HCT116 (cell line): ENCODE measurements at regions of chr6 and their contacts with region 1.

Region 1: DNA sequence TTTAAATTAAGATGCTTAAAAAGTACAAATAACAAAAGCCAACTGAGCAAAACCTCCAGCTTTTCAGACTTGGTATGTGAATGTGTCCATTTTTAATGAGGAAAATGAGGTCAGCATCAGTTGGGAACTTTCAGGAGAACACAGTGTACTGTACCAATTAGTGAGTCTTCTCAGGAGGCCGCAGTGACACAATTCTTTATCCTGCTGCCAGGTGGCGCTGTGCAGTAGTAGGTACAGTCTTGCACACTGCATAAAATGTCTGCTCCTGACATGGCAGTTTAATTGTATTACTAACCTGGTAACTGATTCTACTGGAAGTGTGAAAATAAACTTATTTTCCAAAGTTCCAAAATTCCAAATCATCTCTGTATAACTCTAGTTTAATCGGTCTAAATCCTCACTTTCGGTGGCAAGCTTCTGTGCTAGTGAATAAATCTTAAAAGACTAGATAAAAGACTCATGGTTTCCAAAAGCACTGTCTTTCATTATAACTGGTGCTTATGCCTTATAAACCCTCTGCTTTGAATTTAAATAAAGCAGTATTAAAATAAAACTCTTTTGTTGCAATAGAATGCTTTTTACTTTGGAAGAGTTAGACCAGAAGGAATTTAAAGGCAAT is 214.8 kb upstream of the MMS22L start:
- DNase-seq: peak; percentile 49
- ATAC-seq: peak; percentile 99
- H3K4me3 ChIP-seq: no peak overlapping the region
- H3K27ac ChIP-seq: no peak overlapping the region
- H3K4me1 ChIP-seq: no peaks in the 10 kb centered on the region
- H3K27me3 ChIP-seq: peaks cover 22% of the 10 kb centered on the region
- CTCF ChIP-seq: peak; percentile 56 to 94 (median 84)
- POLR2A ChIP-seq: no peak
- RAD21 ChIP-seq: peak; percentile 66

Region 2: GRCh38 chr6:97186416-97186999 is 311.3 kb before region 1 on chr6:
- CTCF ChIA-PET with region 1: no interaction called
- POLR2A ChIA-PET with region 1: no interaction called
- RAD21 ChIA-PET with region 1: no interaction called
- intact Hi-C with region 1: loop called (anchors 5 kb)
- DNase-seq: peak; percentile 42
- ATAC-seq: peak; percentile 90
- H3K4me3 ChIP-seq: no peak overlapping the region
- H3K27ac ChIP-seq: no peak overlapping the region
- H3K4me1 ChIP-seq: no peaks in the 10 kb centered on the region
- H3K27me3 ChIP-seq: no peaks in the 10 kb centered on the region
- CTCF ChIP-seq: peak; percentile 65 to 97 (median 87); a peak in 5 of 6 replicates
- POLR2A ChIP-seq: no peak
- RAD21 ChIP-seq: peak; percentile 77

Region 3: DNA sequence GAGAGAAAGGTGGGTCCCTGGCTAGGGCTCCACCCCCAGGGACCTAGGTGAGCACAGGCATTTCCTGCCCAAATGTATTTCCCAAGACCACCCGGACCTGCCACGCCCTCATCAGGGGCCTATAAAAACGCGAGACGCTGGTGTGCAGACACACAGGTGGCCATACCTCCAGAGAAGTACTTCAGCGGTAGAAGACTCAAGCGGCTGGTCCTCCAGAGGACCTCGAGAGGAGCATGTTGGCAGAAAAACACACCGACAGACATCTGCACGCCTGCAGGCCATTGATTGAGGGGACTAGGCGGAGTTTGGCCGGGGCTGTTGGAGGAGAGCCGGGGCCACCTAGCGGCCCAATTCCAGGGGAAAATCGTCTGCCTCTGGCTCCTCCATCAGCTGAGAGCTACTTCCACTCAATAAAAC is 481.0 kb after region 1 on chr6:
- CTCF ChIA-PET with region 1: no interaction called
- POLR2A ChIA-PET with region 1: no interaction called
- RAD21 ChIA-PET with region 1: no interaction called
- intact Hi-C with region 1: loop called (anchors 2 kb)
- DNase-seq: peak; percentile 32
- ATAC-seq: peak; percentile 94
- H3K4me3 ChIP-seq: no peak overlapping the region
- H3K27ac ChIP-seq: no peak overlapping the region
- H3K4me1 ChIP-seq: peaks cover 0 to 7% of the 10 kb centered on the region in 2 experiments; a peak in 1 of 4 replicates
- H3K27me3 ChIP-seq: peaks cover 15% of the 10 kb centered on the region; the same call in 1 of the 2 replicates
- CTCF ChIP-seq: peak; percentile 28 to 72 (median 62); a peak in 4 of 6 replicates
- POLR2A ChIP-seq: peak; percentile 95
- RAD21 ChIP-seq: peak; percentile 62

Region 4: DNA sequence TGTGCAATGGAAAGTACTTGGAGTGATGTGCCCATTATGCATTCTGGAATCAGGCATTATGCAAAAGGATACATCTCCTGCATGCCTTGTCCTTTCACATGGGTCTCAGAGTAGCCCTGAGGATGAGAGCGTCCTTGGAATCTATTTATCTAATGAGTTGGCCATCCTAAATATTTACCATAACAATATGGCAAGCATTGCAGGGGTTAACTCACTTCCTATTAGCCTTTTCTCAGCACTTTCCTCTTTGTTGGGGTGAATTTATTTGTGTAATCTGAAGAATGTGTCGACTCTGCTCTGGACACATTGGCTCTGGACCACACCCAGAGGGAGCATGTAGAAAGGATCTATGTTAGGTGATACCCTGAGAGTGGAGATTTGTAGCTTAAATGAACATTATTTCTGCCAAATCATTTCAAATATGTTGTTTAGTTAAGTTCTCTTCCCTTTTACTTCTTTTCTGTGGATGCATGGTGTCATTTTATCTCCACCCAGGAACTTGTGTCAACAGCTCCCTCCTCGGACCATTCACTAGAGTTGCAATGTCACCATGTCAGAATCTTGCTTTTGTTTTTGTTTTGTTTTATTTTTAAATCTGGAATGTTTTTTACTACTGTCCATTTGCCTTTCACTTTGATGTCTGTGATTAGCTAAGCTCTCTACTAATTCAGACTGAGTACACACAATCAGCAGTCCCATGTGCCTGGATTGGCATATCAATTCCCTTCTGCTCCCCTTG is 542.2 kb after region 1 on chr6:
- CTCF ChIA-PET with region 1: no interaction called
- POLR2A ChIA-PET with region 1: no interaction called
- RAD21 ChIA-PET with region 1: no interaction called
- intact Hi-C with region 1: loop called (anchors 2 kb)
- DNase-seq: no peak
- ATAC-seq: no peak
- H3K4me3 ChIP-seq: no peak overlapping the region
- H3K27ac ChIP-seq: no peak overlapping the region
- H3K4me1 ChIP-seq: no peaks in the 10 kb centered on the region
- H3K27me3 ChIP-seq: peaks cover 42% of the 10 kb centered on the region
- CTCF ChIP-seq: peak in 1 of 3 experiments; percentile 45; a peak in 2 of 6 replicates
- POLR2A ChIP-seq: no peak
- RAD21 ChIP-seq: peak; percentile 49

Region 5: DNA sequence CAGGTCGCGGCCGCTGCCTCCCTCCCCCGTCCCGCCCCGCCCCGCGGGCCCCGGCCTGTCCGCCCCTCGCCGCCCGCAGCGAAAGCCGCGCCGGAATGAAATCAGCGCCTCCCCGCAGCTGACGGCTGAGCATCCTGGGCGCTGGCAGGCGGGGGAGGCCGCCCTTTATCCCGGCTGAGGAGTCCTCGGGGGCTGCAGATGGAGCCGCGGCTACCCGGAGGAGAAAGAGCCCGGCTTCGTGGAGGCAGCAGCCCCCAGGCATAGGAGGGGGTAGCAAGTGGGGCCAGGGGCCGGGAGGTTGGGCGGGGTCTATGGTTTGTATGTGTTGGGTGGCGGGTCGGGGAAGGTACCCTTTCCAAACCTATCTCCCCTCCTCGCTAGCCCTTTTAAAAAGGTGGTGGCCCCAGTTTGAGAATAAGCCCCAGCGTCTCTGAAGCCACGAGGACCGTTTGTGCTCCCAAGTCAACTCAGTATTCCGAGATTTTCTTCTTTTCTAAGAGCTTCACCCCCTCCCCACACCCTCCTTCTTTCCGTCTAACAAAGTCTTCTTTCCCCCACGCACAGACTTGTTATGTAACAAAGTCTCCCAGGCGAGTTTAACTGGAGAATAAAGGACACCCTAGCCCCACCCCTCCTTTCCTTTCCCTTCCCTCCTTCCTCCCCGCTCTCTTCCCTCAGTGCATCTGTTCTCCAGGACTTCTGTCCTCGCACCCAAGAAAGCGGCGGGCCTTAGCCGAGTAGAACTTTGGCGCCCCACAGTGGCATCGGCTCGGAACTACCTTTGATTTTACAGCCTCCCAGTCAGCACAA is 1347.6 kb after region 1 on chr6:
- CTCF ChIA-PET with region 1: no interaction called
- POLR2A ChIA-PET with region 1: no interaction called
- RAD21 ChIA-PET with region 1: no interaction called
- intact Hi-C with region 1: loop called (anchors 5 kb)
- DNase-seq: peak; percentile 34
- ATAC-seq: peak; percentile 97
- H3K4me3 ChIP-seq: no peak overlapping the region
- H3K27ac ChIP-seq: no peak overlapping the region
- H3K4me1 ChIP-seq: no peaks in the 10 kb centered on the region
- H3K27me3 ChIP-seq: no peaks in the 10 kb centered on the region
- CTCF ChIP-seq: peak; percentile 57 to 91 (median 84); a peak in 5 of 6 replicates
- POLR2A ChIP-seq: no peak
- RAD21 ChIP-seq: peak; percentile 80

Region 6: DNA sequence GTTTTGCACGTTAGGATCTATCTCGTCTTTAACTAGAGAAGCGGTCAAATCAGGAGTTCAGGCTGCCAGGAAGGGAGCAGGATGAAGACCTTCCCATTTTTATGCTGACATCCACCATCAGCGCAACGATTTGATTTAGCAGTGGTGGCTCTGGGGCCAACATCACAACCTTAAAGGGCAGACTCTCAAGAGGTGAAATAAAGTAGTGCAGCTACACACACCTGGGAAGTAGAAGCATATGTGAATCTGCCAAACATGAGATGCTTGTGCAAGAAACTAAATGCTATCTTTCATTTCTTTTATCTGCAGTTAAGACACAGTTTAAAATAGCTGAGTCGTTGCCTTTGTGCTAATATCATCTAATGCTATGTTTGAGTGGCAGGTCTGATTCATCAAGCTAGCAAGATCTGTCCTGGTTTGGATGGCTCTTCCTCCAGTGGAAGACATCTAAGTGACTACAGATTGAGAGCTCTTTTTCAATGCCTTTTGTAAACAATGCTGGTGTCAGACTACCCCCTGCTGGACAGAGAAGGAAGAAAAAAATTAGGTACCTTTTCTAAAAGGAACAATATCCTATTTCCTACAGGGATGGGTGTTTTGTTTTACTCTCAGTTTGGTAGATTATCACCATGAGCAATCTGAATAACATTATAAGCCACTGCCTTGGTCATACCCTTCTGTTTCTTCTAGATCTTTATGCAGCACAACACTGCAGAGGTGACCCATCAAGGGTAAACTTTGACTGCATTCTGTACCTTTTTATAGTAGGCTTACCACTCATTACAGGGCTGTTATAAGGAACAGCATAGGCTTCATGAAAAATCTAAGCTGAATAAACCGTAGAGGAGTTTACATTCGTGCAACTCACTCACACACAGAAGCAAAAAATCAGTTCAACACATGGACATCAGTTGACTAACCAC is 1621.5 kb after region 1 on chr6:
- CTCF ChIA-PET with region 1: no interaction called
- POLR2A ChIA-PET with region 1: no interaction called
- RAD21 ChIA-PET with region 1: no interaction called
- intact Hi-C with region 1: loop called (anchors 2 kb)
- DNase-seq: peak; percentile 12
- ATAC-seq: peak; percentile 78
- H3K4me3 ChIP-seq: no peak overlapping the region
- H3K27ac ChIP-seq: no peak overlapping the region
- H3K4me1 ChIP-seq: no peaks in the 10 kb centered on the region
- H3K27me3 ChIP-seq: peaks cover 43% of the 10 kb centered on the region
- CTCF ChIP-seq: peak; percentile 50 to 73 (median 53); a peak in 4 of 6 replicates
- POLR2A ChIP-seq: no peak
- RAD21 ChIP-seq: peak; percentile 81

Region 7: GRCh38 chr6:99241905-99242534 is 1744.2 kb after region 1 on chr6:
- CTCF ChIA-PET with region 1: no interaction called
- POLR2A ChIA-PET with region 1: no interaction called
- RAD21 ChIA-PET with region 1: no interaction called
- intact Hi-C with region 1: loop called (anchors 10 kb)
- DNase-seq: peak; percentile 38
- ATAC-seq: peak; percentile 86
- H3K4me3 ChIP-seq: no peak overlapping the region
- H3K27ac ChIP-seq: no peak overlapping the region
- H3K4me1 ChIP-seq: no peaks in the 10 kb centered on the region
- H3K27me3 ChIP-seq: peaks cover 58% of the 10 kb centered on the region
- CTCF ChIP-seq: peak; percentile 34 to 63 (median 42); a peak in 4 of 6 replicates
- POLR2A ChIP-seq: no peak
- RAD21 ChIP-seq: peak; percentile 74